ENCODE measurements at regions of chr3 and their contacts with region 1.

Region 1: GRCh38 chr3:126394575-126395228 is at the start of gene CFAP100:
- DNase-seq: no peak
- ATAC-seq: no peak
- H3K4me3 ChIP-seq: no peak within 1 kb of the TSS
- H3K27ac ChIP-seq: no peak within 1 kb of the TSS
- H3K4me1 ChIP-seq: peaks cover 0 to 4% of the 10 kb centered on the region in 2 experiments; a peak in 3 of 5 replicates
- H3K27me3 ChIP-seq: peaks cover 5 to 62% of the 10 kb centered on the region in 2 experiments; a peak in 4 of 5 replicates
- CTCF ChIP-seq: no peak
- EP300 ChIP-seq: no peak
- POLR2A ChIP-seq: no peak
- RAD21 ChIP-seq: no peak
- polyA plus RNA-seq, gene CFAP100: not detected

Region 2: GRCh38 chr3:126252373-126252772 is 142.3 kb before region 1 on chr3:
- CTCF ChIA-PET with region 1: no interaction called
- POLR2A ChIA-PET with region 1: no interaction called
- in situ Hi-C with region 1: loop called (anchors 5 kb)
- intact Hi-C with region 1: no loop called
- DNase-seq: no peak
- ATAC-seq: no peak
- H3K4me3 ChIP-seq: no peak overlapping the region
- H3K27ac ChIP-seq: no peak overlapping the region
- H3K4me1 ChIP-seq: no peaks in the 10 kb centered on the region
- H3K27me3 ChIP-seq: peaks cover 0 to 13% of the 10 kb centered on the region in 2 experiments; a peak in 3 of 5 replicates
- CTCF ChIP-seq: no peak
- EP300 ChIP-seq: no peak
- POLR2A ChIP-seq: no peak
- RAD21 ChIP-seq: no peak

Measured in K562 (cell line).